ENCODE measurements at regions of chr5 and their contacts with region 1.

Region 1: GRCh38 chr5:36414869-36415282 is 113.2 kb upstream of the RANBP3L start:
- DNase-seq: no peak
- H3K4me3 ChIP-seq: no peak overlapping the region
- H3K27ac ChIP-seq: no peak overlapping the region
- H3K4me1 ChIP-seq: peaks cover 0 to 18% (median 2%) of the 10 kb centered on the region in 4 donors
- H3K27me3 ChIP-seq: no peaks in the 10 kb centered on the region
- CTCF ChIP-seq: peak; percentile 56
- EP300 ChIP-seq: no peak
- POLR2A ChIP-seq: no peak

Region 2: GRCh38 chr5:36305571-36306326 is 109.1 kb before region 1 on chr5:
- intact Hi-C with region 1: no loop called
- DNase-seq: no peak
- H3K4me3 ChIP-seq: no peak overlapping the region
- H3K27ac ChIP-seq: peak overlapping the region in 1 of 4 donors; percentile 11
- H3K4me1 ChIP-seq: peaks cover 15 to 44% (median 27%) of the 10 kb centered on the region in 4 donors
- H3K27me3 ChIP-seq: no peaks in the 10 kb centered on the region
- CTCF ChIP-seq: peak; percentile 67 to 80 (median 77)
- EP300 ChIP-seq: no peak
- POLR2A ChIP-seq: no peak

Region 3: GRCh38 chr5:36459176-36460135 is 44.6 kb after region 1 on chr5:
- intact Hi-C with region 1: no loop called
- DNase-seq: no peak
- H3K4me3 ChIP-seq: no peak overlapping the region
- H3K27ac ChIP-seq: no peak overlapping the region
- H3K4me1 ChIP-seq: peaks cover 0 to 3% (median 0%) of the 10 kb centered on the region in 4 donors
- H3K27me3 ChIP-seq: no peaks in the 10 kb centered on the region
- CTCF ChIP-seq: no peak
- EP300 ChIP-seq: no peak
- POLR2A ChIP-seq: no peak

Region 4: GRCh38 chr5:36507332-36507952 is 92.6 kb after region 1 on chr5:
- intact Hi-C with region 1: loop called (anchors 1 kb)
- DNase-seq: no peak
- H3K4me3 ChIP-seq: no peak overlapping the region
- H3K27ac ChIP-seq: no peak overlapping the region
- H3K4me1 ChIP-seq: peaks cover 5 to 35% (median 23%) of the 10 kb centered on the region in 4 donors
- H3K27me3 ChIP-seq: no peaks in the 10 kb centered on the region
- CTCF ChIP-seq: peak; percentile 74 to 89 (median 88)
- EP300 ChIP-seq: no peak
- POLR2A ChIP-seq: no peak

Region 5: GRCh38 chr5:36690041-36690961 is 275.4 kb after region 1 on chr5:
- intact Hi-C with region 1: loop called (anchors 2 kb)
- DNase-seq: peak; percentile 95
- H3K4me3 ChIP-seq: peak overlapping the region; percentile 61 to 66 (median 64)
- H3K27ac ChIP-seq: peak overlapping the region; percentile 62 to 81 (median 76)
- H3K4me1 ChIP-seq: peaks cover 20 to 39% (median 34%) of the 10 kb centered on the region in 4 donors
- H3K27me3 ChIP-seq: no peaks in the 10 kb centered on the region
- CTCF ChIP-seq: peak; percentile 69 to 83 (median 72)
- EP300 ChIP-seq: no peak
- POLR2A ChIP-seq: no peak